ENCODE measurements at regions of chr13 and their contacts with region 1.

Region 1: DNA sequence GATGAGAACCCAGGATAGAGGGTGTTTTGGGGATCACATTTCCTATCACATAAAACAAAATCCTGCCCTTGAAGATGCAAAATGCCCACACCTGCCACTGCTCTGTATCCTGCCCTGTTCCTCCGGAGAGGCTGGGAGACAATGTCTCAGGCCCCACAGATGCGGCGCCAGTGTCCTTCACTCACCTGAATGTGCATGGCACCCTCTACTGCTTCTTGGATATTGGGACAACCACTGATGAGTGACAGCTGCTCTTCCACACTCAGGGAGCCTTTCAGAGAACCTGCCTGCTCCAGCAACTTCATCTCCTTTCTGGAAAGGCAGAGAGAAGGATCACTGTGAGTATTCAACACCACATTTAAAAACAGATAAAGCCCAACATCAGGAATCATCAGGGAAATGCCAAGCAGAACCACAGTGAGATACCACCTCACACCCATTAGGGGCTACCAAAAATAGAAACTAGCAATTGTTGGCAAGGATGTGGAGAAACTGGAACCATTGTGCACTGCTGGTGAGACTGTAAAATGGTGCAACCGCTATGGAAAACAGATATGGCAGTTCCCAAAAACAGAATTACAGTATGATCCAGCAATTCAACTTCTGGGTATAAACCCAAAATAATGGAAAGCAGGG is 36.4 kb downstream of the CRYL1 start:
- DNase-seq: peak; percentile 39
- ATAC-seq: peak; percentile 98
- H3K4me3 ChIP-seq: no peak overlapping the region
- H3K27ac ChIP-seq: peak overlapping the region; percentile 29; the same call in 1 of the 2 replicates
- H3K4me1 ChIP-seq: no peaks in the 10 kb centered on the region
- H3K27me3 ChIP-seq: no peaks in the 10 kb centered on the region
- CTCF ChIP-seq: peak; percentile 84

Region 2: GRCh38 chr13:19581675-19582074 is 907.6 kb before region 1 on chr13:
- CTCF ChIA-PET with region 1: no interaction called
- POLR2A ChIA-PET with region 1: no interaction called
- in situ Hi-C with region 1: no loop called
- intact Hi-C with region 1: no loop called
- DNase-seq: no peak
- ATAC-seq: no peak
- H3K4me3 ChIP-seq: no peak overlapping the region
- H3K27ac ChIP-seq: no peak overlapping the region
- H3K4me1 ChIP-seq: no peaks in the 10 kb centered on the region
- H3K27me3 ChIP-seq: no peaks in the 10 kb centered on the region
- CTCF ChIP-seq: no peak

Region 3: DNA sequence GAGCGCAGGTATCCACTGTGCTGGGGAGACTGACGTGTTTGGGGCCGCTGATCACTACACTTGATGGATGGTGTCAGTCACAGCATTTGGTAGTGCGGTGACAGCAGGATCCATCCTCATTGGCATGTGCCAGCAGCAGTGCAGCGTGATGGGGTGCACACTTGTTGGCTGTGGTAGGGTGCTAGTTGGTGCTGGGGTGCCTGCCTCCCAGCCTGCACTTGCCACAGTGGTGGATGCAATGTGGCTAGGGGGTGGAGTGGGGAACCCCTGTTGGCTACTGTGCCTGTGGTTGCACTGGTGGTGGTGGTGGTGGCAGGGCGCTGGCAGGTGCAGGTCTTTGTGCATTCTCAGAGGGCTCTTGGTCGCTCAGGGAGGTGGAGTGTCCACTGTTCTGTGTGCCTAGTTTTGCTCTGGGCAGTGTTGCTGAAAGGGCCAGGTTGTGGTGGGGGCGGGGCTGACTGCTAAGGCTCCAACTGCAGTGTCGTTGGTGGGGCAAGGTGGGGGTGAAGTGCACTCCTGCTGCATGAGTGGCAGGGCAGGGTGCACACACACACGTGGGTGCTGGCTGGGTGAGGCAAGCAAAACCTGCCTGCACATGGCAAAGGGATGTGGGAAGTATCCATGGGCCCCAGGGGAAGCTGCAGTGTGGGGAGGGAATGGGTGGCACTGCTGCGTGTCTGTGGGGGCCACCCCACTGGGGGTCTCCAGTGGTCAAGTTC is 445.9 kb before region 1 on chr13:
- CTCF ChIA-PET with region 1: no interaction called
- POLR2A ChIA-PET with region 1: no interaction called
- in situ Hi-C with region 1: no loop called
- intact Hi-C with region 1: no loop called
- DNase-seq: no peak
- ATAC-seq: no peak; the same call in 1 of the 2 replicates
- H3K4me3 ChIP-seq: no peak overlapping the region
- H3K27ac ChIP-seq: no peak overlapping the region
- H3K4me1 ChIP-seq: no peaks in the 10 kb centered on the region
- H3K27me3 ChIP-seq: no peaks in the 10 kb centered on the region
- CTCF ChIP-seq: no peak

Region 4: DNA sequence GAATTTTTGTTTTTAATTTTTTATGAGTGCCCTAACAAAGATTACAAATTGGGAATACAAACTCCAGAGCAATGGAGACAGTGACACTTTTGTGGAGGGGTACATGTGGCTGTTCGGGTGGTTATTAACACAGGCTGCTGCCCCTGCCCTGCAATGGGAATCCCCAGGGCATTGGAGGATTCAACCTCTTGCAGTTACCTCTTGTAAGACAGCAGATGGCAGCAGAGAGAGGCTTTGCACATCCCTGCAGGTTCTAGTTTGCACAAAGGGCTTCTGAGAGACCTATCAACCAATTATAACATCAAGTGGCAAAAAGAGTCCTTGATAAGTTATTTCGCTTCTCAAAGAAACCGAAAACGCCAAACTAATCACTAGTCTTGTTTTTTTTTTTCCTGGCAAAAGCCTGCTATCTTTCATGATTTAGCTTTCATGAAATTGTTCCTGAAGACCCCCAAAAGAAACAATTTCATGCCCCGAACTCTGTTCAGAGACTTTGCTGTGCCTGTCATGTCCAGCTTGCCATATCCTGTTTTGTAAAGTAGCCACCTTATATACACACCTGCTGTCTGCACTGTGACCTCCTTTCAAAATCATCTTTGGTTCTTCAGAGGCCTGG is 307.0 kb before region 1 on chr13:
- CTCF ChIA-PET with region 1: no interaction called
- POLR2A ChIA-PET with region 1: no interaction called
- in situ Hi-C with region 1: no loop called
- intact Hi-C with region 1: loop called (anchors 1 kb)
- DNase-seq: peak; percentile 50
- ATAC-seq: peak; percentile 93
- H3K4me3 ChIP-seq: no peak overlapping the region
- H3K27ac ChIP-seq: no peak overlapping the region
- H3K4me1 ChIP-seq: no peaks in the 10 kb centered on the region; the same call in 1 of the 2 replicates
- H3K27me3 ChIP-seq: no peaks in the 10 kb centered on the region
- CTCF ChIP-seq: peak; percentile 85

Region 5: DNA sequence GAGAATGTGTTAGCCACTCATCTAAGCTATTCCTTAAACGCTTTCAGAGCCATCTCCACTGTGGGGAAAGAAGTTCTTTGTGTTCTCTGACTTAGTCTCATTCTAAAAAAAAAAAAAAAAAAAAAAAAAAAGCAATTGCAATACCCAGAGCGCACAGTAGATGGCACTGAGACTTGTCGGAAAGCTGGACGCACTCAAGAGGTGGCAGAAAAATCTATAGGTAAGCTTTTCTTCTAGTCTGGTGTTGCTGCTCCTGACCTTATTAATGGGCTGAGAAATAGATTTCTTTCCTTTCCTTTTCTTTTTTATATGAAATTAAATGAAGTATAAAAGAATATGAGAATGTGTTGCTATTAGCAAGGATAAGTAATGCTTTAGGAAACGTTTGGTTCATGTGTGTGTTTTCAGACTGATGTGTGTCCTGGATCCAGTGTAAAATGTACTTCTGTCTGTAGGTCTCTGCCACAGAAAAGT is 291.9 kb before region 1 on chr13:
- CTCF ChIA-PET with region 1: interaction called, 6 read pairs
- POLR2A ChIA-PET with region 1: interaction called, 6 read pairs
- in situ Hi-C with region 1: no loop called
- intact Hi-C with region 1: loop called (anchors 2 kb)
- DNase-seq: peak; percentile 36
- ATAC-seq: peak; percentile 64; the same call in 1 of the 2 replicates
- H3K4me3 ChIP-seq: no peak overlapping the region
- H3K27ac ChIP-seq: peak overlapping the region; percentile 48; the same call in 1 of the 2 replicates
- H3K4me1 ChIP-seq: no peaks in the 10 kb centered on the region
- H3K27me3 ChIP-seq: no peaks in the 10 kb centered on the region; the same call in 1 of the 2 replicates
- CTCF ChIP-seq: peak; percentile 69

Region 6: DNA sequence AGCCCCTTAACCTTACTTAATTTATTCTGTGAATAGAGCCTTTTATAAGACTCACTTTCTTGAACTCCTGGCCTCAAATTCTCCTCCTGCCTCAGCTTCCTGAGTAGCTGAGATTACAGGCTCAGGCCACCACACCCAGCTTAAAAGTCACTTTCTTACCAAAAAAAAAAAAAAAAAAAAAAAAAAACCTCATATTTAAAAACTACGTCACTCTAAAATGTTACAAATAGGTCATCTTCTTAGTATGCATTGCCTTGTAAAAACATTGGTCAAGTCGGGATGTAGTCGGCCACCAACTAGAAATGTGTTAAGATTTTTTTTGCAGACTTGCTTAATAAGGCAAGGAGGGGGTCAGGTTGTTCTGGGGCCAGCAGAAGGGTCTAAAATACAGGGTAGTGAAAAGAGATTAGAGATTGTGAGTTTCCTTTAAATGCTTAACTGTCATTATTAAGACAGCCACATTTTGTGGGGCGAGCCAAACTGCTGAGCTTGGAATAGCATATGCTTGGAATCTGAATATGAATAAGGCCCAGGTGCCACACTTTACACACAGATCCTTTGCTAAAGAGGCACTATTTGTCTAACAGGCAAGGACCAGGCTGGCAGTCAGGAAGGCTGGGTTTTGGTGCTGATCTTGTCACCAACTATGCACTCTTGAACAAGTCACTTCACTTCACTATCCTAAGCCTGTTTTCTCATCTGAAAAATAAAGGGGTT is 197.7 kb after region 1 on chr13:
- CTCF ChIA-PET with region 1: no interaction called
- POLR2A ChIA-PET with region 1: no interaction called
- in situ Hi-C with region 1: no loop called
- intact Hi-C with region 1: no loop called
- DNase-seq: no peak
- ATAC-seq: no peak
- H3K4me3 ChIP-seq: no peak overlapping the region
- H3K27ac ChIP-seq: no peak overlapping the region
- H3K4me1 ChIP-seq: no peaks in the 10 kb centered on the region
- H3K27me3 ChIP-seq: no peaks in the 10 kb centered on the region
- CTCF ChIP-seq: no peak

Measured in Panc1 (cell line).